Activated CD4-positive, alpha-beta memory T cell treated with anti-CD3 and anti-CD28 coated beads for 36 hours (primary cell): ENCODE measurements at regions of chr12 and their contacts with region 1.

Region 1: DNA sequence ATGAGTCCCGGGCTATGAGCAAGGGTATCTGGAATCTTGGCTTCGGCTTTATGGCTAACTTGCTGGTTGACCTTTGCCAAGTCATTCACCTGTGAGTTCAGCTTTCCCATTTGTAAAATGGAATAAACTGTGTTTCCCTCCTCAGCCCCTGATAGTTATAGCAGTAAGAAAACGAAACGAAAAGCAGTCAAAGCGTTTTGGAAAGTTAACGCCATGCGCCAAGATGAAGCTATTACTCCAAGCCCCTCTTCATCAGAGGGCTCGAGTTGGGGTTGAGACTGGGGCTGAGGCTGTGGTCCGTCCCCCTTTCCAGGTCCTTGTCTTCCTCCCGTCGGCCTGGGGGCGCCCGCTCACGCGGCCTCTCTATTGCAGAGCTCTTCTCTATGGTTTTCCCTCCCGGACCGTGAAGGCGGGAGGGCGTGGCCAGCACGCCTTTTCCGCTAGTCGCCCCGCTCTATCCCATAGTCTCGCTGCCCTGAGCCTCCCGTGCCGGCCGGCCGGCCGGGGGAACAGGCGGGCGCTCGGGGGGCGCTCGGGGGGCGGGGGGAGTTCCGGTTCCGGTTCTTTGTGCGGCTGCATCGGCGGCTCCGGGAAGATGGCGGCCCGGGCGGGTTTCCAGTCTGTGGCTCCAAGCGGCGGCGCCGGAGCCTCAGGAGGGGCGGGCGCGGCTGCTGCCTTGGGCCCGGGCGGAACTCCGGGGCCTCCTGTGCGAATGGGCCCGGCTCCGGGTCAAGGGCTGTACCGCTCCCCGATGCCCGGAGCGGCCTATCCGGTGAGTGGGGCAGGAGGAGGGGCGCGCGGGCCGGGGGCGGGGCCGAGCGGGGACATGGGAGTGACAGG is at the start of gene SMARCD1:
- DNase-seq: peak; percentile 91
- H3K4me3 Mint-ChIP-seq: peak within 1 kb of the TSS; percentile 89
- H3K27ac Mint-ChIP-seq: peak within 1 kb of the TSS; percentile 94
- H3K4me1 Mint-ChIP-seq: peaks cover 44% of the 10 kb centered on the region
- H3K27me3 Mint-ChIP-seq: no peaks in the 10 kb centered on the region
- total RNA-seq, gene SMARCD1: 56.1 to 56.3 TPM

Region 2: GRCh38 chr12:49990273-49990672 is 94.7 kb before region 1 on chr12:
- CTCF ChIA-PET with region 1: no interaction called
- POLR2A ChIA-PET with region 1: no interaction called
- intact Hi-C with region 1: no loop called
- DNase-seq: no peak
- H3K4me3 Mint-ChIP-seq: no peak overlapping the region
- H3K27ac Mint-ChIP-seq: no peak overlapping the region
- H3K4me1 Mint-ChIP-seq: peaks cover 4% of the 10 kb centered on the region
- H3K27me3 Mint-ChIP-seq: no peaks in the 10 kb centered on the region

Region 3: GRCh38 chr12:50103767-50104321 is 18.8 kb after region 1 on chr12 and contains the start of gene GPD1:
- CTCF ChIA-PET with region 1: interaction called, 13 read pairs
- POLR2A ChIA-PET with region 1: no interaction called
- intact Hi-C with region 1: no loop called
- DNase-seq: peak; percentile 45
- H3K4me3 Mint-ChIP-seq: no peak within 1 kb of the TSS
- H3K27ac Mint-ChIP-seq: no peak within 1 kb of the TSS
- H3K4me1 Mint-ChIP-seq: no peaks in the 10 kb centered on the region
- H3K27me3 Mint-ChIP-seq: no peaks in the 10 kb centered on the region
- total RNA-seq, gene GPD1: 0.10 to 0.34 TPM

Region 4: DNA sequence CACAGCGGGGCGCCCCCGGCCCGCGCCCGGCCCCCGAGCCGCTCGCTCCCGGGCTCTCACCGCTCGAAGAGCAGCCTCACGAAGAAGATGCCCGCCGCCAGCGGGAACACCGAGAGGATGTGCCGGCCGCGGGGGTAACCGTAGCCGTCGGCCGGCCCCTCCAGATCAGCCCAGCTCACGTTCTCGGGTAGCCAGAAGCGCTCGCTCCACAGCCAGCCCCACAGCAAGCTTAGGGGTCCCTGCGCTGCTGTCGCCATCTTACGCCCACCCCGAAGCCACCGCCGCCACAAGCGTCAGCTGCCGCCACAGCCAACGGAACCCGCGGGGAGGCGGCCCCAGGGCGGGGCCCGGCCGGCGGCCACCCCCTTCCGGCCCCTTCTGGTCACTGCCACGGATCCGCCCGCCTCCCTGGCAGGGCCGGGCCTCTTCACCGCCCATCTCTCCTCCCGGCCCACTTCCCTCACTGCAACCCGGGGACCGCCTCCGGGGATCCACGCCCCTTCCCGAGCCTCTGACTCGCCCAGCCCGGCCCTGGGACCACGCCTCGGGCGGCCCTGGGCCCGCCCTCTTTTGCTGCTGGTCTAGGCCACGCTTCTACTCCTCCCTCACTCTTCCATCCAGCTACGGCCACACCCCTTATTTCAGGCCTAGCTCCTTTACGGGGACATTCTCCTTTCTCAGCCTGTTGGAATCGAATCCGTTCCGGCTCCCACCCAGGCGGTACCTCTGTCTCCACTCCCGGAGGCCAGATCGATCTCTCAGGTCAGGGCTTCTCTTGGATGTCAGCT is 82.2 kb after region 1 on chr12 and contains the start of gene CERS5:
- CTCF ChIA-PET with region 1: interaction called, 5 read pairs
- POLR2A ChIA-PET with region 1: interaction called, 4 read pairs
- intact Hi-C with region 1: loop called (anchors 1 kb)
- DNase-seq: peak; percentile 99
- H3K4me3 Mint-ChIP-seq: peak within 1 kb of the TSS; percentile 84
- H3K27ac Mint-ChIP-seq: peak within 1 kb of the TSS; percentile 94
- H3K4me1 Mint-ChIP-seq: peaks cover 28% of the 10 kb centered on the region
- H3K27me3 Mint-ChIP-seq: no peaks in the 10 kb centered on the region
- total RNA-seq, gene CERS5: 59.5 to 63.0 TPM

Region 5: DNA sequence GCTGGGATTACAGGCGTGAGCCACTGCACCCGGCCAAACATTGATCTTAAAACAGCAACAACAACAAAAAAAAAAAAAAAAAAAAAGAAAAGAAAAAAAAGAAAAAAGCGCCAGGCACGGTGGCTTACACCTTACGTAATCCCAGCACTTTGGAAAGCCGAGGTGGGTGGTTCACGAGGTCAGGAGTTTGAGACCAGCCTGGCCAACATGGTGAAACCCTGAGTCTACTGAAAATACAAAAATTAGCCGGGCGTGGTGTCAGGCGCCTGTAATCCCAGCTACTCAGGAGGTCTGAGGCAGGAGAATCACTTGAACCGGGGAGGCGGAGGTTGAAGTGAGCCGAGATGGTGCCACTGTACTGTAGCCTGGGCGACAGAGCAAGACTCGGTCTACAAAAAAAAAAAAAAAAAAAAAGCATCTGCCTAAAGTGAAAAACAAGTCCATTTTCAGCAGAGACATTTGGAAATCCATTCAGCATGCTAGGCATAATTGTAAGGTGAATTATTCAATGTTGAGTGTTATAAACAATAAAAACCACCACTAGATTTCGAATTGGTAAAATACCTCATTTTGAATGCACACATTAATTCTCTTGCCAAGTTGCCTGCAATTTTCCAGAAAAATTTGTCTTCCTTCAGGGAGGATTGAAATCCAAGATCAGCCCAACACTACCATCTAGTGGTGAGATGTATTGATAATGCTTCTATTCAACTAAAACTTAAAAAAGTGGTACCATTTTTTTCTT is 90.1 kb after region 1 on chr12:
- CTCF ChIA-PET with region 1: interaction called, 21 read pairs
- POLR2A ChIA-PET with region 1: no interaction called
- intact Hi-C with region 1: no loop called
- DNase-seq: no peak
- H3K4me3 Mint-ChIP-seq: no peak overlapping the region
- H3K27ac Mint-ChIP-seq: no peak overlapping the region
- H3K4me1 Mint-ChIP-seq: no peaks in the 10 kb centered on the region
- H3K27me3 Mint-ChIP-seq: no peaks in the 10 kb centered on the region

Region 6: GRCh38 chr12:50314629-50315312 is 229.8 kb after region 1 on chr12:
- CTCF ChIA-PET with region 1: no interaction called
- POLR2A ChIA-PET with region 1: no interaction called
- intact Hi-C with region 1: loop called (anchors 5 kb)
- DNase-seq: no peak
- H3K4me3 Mint-ChIP-seq: no peak overlapping the region
- H3K27ac Mint-ChIP-seq: no peak overlapping the region
- H3K4me1 Mint-ChIP-seq: no peaks in the 10 kb centered on the region
- H3K27me3 Mint-ChIP-seq: no peaks in the 10 kb centered on the region

Region 7: DNA sequence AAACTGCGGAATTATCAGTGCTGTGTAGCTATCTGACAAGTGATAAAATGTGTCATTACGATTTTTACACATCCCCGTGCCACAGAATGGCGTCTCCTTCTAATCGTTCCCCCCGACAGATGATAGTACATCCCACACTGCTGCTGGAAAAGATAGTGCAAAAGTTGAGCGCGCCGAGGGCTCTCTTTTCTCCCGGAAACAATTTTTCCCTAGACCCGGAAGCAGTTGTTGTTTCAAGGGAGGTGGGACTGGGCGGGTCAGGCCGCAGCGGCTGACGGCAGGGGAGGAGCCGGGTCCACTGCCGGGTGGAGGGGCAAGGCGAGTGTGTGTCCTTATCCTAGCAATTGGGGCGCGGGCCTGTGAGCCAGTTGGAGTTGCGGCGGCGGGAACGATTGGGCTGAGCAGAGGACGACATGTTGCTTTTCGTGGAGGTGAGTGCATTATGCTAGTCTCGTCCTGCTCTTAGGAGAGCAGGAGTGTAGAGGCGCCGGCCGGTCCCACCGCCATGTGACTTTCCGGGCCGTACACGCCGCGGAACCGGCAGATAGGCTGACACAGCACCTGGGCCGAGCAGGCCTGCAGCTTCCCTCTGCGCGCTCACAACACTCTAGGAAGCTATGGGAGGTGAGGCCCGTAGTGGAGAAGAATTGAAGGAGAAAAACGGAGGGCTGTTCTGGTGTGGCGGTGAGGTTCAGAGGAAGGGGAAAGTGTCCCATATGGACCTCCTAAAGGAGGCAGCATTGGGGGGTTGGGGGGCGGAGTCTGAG is 315.8 kb after region 1 on chr12 and contains the start of gene LARP4:
- CTCF ChIA-PET with region 1: no interaction called
- POLR2A ChIA-PET with region 1: no interaction called
- intact Hi-C with region 1: loop called (anchors 1 kb)
- DNase-seq: peak; percentile 95
- H3K4me3 Mint-ChIP-seq: peak within 1 kb of the TSS; percentile 91
- H3K27ac Mint-ChIP-seq: peak within 1 kb of the TSS; percentile 95
- H3K4me1 Mint-ChIP-seq: peaks cover 23% of the 10 kb centered on the region
- H3K27me3 Mint-ChIP-seq: no peaks in the 10 kb centered on the region
- total RNA-seq, gene LARP4: 62.2 to 64.0 TPM